ENCODE measurements at regions of chr2 and their contacts with region 1.

Region 1: GRCh38 chr2:70340921-70341765 is 39.3 kb upstream of the FAM136A start:
- DNase-seq: no peak
- ATAC-seq: peak; percentile 46

Region 2: DNA sequence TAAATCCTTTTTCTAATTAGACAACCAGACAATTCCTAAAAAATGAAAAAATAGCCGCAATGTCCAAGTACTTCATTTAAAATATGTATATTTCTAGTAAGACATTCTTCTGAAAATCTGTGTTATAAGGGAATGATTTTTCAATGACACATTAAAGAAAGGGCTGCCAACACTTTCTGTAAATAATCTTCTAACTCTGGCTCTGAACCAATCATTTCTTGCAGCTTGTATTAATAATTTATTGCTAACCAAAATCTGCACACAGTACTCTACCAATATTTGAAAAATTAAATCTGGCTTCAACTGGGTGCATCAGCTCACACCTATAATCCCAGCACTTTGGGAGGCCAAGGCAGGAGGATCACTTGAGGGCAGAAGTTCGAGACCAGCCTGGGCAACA is 912.2 kb before region 1 on chr2:
- intact Hi-C with region 1: no loop called
- DNase-seq: no peak
- ATAC-seq: no peak

Region 3: DNA sequence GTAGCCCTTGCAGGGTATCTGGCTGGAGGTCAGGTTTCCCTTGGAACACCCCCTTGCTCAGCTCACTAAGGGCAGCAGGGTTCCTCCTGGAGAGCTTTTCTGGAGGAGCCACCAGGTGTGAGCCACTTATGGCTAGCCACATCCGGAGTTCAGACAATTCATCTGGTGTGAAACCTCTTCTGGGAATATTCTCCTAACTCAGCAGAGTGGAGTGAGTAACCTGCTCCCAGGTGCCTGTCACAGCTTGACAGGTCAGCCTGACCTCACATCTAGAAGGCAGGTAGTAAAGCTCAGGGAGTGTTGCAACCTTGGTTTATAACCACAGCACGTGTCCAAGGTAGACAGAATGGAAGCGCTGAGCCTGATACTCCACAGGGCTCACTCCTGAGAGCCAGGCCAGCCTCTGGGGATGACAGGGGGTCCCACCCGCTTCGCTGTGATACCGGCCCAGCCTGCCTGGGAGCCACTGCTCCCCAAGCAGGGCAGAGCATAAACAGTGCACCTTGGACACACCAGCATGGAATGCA is 275.1 kb after region 1 on chr2:
- intact Hi-C with region 1: loop called (anchors 10 kb)
- DNase-seq: no peak
- ATAC-seq: no peak

Region 4: GRCh38 chr2:70793450-70793849 is 452.3 kb after region 1 on chr2:
- intact Hi-C with region 1: no loop called
- DNase-seq: no peak
- ATAC-seq: no peak

Measured in left ventricle myocardium superior (tissue), 1 donor.